CD8-positive, alpha-beta T cell (primary cell): ENCODE measurements at regions of chr1 and their contacts with region 1.

Region 1: DNA sequence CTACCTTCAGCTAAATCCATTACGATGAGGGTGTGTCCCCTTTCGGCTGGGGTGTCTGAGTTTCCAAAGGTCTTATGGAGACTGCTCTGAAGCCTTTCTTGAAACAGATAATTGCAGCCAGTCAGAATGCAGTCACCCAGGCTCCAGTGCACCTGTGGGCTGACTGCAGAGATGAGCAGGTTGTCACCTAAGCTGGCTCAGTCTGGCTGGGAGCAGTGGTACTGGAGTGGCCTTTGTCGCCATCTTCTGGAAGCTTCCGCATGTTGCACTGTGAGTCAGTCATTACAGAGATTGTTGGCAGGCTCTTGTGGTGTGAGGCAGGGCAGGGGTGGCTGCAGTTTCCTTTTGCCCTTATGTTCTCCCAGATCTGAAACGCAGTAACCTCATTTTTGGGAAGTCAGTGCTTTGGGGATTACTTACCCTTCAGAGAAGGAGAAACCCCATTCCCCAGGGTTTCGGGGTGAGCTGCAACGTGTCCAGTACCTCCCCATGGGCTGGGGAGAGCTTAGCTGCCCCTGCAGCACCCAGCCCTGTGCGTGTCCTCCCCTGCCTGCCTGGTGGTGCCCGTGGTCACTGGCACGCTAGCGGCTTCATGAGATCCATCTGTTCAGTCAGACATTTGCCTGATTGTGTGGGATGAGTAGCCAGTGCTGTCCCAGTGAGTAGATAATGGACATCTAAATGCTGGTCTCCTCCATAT is 48.0 kb downstream of the SMYD2 start:
- DNase-seq: peak; percentile 62 to 87 (median 75)
- ATAC-seq: peak; percentile 98
- H3K4me3 ChIP-seq: no peak overlapping the region
- H3K4me3 Mint-ChIP-seq: no peak overlapping the region
- H3K27ac ChIP-seq: no peak overlapping the region
- H3K27ac Mint-ChIP-seq: no peak overlapping the region
- H3K4me1 ChIP-seq: no peaks in the 10 kb centered on the region
- H3K4me1 Mint-ChIP-seq: no peaks in the 10 kb centered on the region
- H3K27me3 ChIP-seq: no peaks in the 10 kb centered on the region
- H3K27me3 Mint-ChIP-seq: no peaks in the 10 kb centered on the region
- CTCF ChIP-seq: peak; percentile 79

Region 2: DNA sequence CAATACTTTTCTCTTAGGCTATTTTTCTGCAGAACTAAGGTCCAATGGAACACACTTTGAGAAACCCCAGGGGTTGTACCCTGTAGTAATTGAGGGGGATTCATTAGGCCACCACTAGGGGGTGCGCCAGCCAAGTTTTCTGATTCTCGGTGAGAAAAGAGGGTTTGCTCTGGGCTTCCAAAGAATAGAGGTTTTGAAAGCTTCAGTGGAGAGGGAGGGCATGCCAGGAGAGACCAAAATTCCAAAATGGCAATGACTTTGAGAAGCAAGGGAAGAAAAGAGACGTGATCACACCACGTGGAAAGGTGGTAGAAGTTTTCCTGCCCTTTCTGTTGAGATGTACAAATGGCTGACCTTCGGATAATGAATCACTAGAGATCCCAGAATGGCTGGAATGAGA is 954.6 kb before region 1 on chr1:
- CTCF ChIA-PET with region 1: no interaction called
- POLR2A ChIA-PET with region 1: no interaction called
- intact Hi-C with region 1: loop called in 1 of 2 experiments (anchors 2 kb)
- DNase-seq: peak; percentile 13 to 53 (median 32)
- ATAC-seq: no peak
- H3K4me3 ChIP-seq: no peak overlapping the region
- H3K4me3 Mint-ChIP-seq: no peak overlapping the region
- H3K27ac ChIP-seq: no peak overlapping the region
- H3K27ac Mint-ChIP-seq: no peak overlapping the region
- H3K4me1 ChIP-seq: no peaks in the 10 kb centered on the region
- H3K4me1 Mint-ChIP-seq: no peaks in the 10 kb centered on the region
- H3K27me3 ChIP-seq: no peaks in the 10 kb centered on the region
- H3K27me3 Mint-ChIP-seq: no peaks in the 10 kb centered on the region
- CTCF ChIP-seq: peak; percentile 73

Region 3: DNA sequence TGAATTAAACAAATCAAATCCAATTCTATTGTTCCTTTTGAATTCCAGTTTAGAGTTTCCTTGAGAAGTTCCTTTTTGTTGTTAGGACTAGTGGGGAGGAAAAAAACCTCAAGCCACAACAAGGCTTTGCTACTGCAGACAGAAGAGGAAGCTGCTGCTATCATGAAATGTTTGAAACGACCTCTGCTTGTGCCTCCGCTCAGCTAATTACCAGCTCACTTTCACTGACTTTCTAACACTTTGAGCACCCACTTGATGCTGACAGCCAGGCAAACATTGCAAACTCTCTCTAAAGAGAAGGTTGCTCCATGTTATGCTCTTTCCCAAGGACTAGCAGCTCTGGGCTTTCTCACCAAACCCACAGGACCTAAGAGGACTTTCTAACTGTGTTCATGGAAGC is 545.0 kb before region 1 on chr1:
- CTCF ChIA-PET with region 1: no interaction called
- POLR2A ChIA-PET with region 1: no interaction called
- intact Hi-C with region 1: no loop called
- DNase-seq: peak in 2 of 9 experiments; percentile 2 to 31
- ATAC-seq: no peak
- H3K4me3 ChIP-seq: no peak overlapping the region
- H3K4me3 Mint-ChIP-seq: peak overlapping the region; percentile 20
- H3K27ac ChIP-seq: no peak overlapping the region
- H3K27ac Mint-ChIP-seq: no peak overlapping the region
- H3K4me1 ChIP-seq: peaks cover 9% of the 10 kb centered on the region
- H3K4me1 Mint-ChIP-seq: peaks cover 8% of the 10 kb centered on the region
- H3K27me3 ChIP-seq: peaks cover 0 to 4% of the 10 kb centered on the region in 2 experiments
- H3K27me3 Mint-ChIP-seq: peaks cover 10% of the 10 kb centered on the region
- CTCF ChIP-seq: no peak

Region 4: GRCh38 chr1:214135886-214136285 is 193.0 kb before region 1 on chr1:
- CTCF ChIA-PET with region 1: no interaction called
- POLR2A ChIA-PET with region 1: no interaction called
- intact Hi-C with region 1: no loop called
- DNase-seq: no peak
- ATAC-seq: no peak
- H3K4me3 ChIP-seq: no peak overlapping the region
- H3K4me3 Mint-ChIP-seq: no peak overlapping the region
- H3K27ac ChIP-seq: no peak overlapping the region
- H3K27ac Mint-ChIP-seq: no peak overlapping the region
- H3K4me1 ChIP-seq: no peaks in the 10 kb centered on the region
- H3K4me1 Mint-ChIP-seq: no peaks in the 10 kb centered on the region
- H3K27me3 ChIP-seq: peaks cover 0 to 4% of the 10 kb centered on the region in 2 experiments
- H3K27me3 Mint-ChIP-seq: no peaks in the 10 kb centered on the region
- CTCF ChIP-seq: no peak

Region 5: GRCh38 chr1:214261206-214262123 is 67.5 kb before region 1 on chr1:
- CTCF ChIA-PET with region 1: interaction called, 681 read pairs
- POLR2A ChIA-PET with region 1: interaction called, 11 read pairs
- intact Hi-C with region 1: loop called (anchors 1 kb)
- DNase-seq: peak; percentile 61 to 89 (median 80)
- ATAC-seq: peak; percentile 96
- H3K4me3 ChIP-seq: no peak overlapping the region
- H3K4me3 Mint-ChIP-seq: no peak overlapping the region
- H3K27ac ChIP-seq: no peak overlapping the region
- H3K27ac Mint-ChIP-seq: no peak overlapping the region
- H3K4me1 ChIP-seq: peaks cover 3% of the 10 kb centered on the region
- H3K4me1 Mint-ChIP-seq: peaks cover 2% of the 10 kb centered on the region
- H3K27me3 ChIP-seq: peaks cover 0 to 2% of the 10 kb centered on the region in 2 experiments
- H3K27me3 Mint-ChIP-seq: peaks cover 63% of the 10 kb centered on the region
- CTCF ChIP-seq: peak; percentile 94

Region 6: GRCh38 chr1:214303141-214303930 is 25.6 kb before region 1 on chr1:
- CTCF ChIA-PET with region 1: interaction called, 16 read pairs
- POLR2A ChIA-PET with region 1: no interaction called
- intact Hi-C with region 1: no loop called
- DNase-seq: no peak
- ATAC-seq: no peak
- H3K4me3 ChIP-seq: no peak overlapping the region
- H3K4me3 Mint-ChIP-seq: no peak overlapping the region
- H3K27ac ChIP-seq: no peak overlapping the region
- H3K27ac Mint-ChIP-seq: peak overlapping the region; percentile 66
- H3K4me1 ChIP-seq: peaks cover 9% of the 10 kb centered on the region
- H3K4me1 Mint-ChIP-seq: peaks cover 38% of the 10 kb centered on the region
- H3K27me3 ChIP-seq: no peaks in the 10 kb centered on the region
- H3K27me3 Mint-ChIP-seq: no peaks in the 10 kb centered on the region
- CTCF ChIP-seq: no peak

Region 7: DNA sequence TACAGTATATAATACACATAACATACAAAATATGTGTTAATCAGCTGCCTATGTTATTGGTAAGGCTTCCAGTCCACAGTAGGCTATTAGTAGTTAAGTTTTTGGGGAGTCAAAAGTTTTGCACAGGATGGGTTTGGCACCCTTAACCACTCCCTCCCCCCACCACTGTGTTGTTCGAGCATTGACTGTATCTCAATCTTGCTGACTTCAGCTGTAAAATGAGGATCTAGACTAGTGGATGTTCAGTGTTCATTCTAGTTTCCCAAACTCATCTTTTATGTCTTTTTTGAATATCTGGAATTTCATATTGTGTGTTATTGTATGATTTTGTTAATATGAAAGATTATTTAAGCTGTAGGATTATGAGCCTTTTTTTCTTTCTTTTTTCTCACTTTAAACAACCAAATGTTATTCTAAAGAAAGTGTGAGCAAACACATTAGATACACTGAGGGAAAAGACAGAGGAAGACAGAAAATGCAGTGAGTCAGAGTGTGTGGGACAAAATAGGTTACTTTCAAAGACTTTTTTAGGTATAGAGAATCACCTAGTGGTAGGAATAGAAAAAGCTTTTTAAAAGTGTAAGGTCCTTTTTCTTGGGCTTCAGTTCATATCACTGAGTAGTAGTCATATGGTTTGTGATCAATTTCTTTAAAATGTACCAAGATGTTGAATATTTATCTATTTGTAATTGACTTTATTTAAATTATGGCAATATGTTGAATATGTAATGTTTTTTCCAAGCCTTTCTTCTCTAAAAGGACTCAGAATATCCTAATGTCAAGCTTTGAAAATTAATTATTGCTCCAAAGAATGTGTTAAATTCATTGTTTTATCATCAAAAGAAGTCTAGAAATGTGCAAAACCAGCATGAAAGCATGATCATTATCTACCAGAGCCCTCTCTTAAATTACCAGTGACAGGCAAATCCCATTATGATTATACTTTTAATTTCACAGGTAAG is 256.2 kb after region 1 on chr1:
- CTCF ChIA-PET with region 1: interaction called, 14 read pairs
- POLR2A ChIA-PET with region 1: no interaction called
- intact Hi-C with region 1: loop called in 1 of 2 experiments (anchors 2 kb)
- DNase-seq: no peak
- ATAC-seq: no peak
- H3K4me3 ChIP-seq: no peak overlapping the region
- H3K4me3 Mint-ChIP-seq: no peak overlapping the region
- H3K27ac ChIP-seq: no peak overlapping the region
- H3K27ac Mint-ChIP-seq: no peak overlapping the region
- H3K4me1 ChIP-seq: no peaks in the 10 kb centered on the region
- H3K4me1 Mint-ChIP-seq: no peaks in the 10 kb centered on the region
- H3K27me3 ChIP-seq: peaks cover 0 to 3% of the 10 kb centered on the region in 2 experiments
- H3K27me3 Mint-ChIP-seq: peaks cover 10% of the 10 kb centered on the region
- CTCF ChIP-seq: peak; percentile 37

Region 8: DNA sequence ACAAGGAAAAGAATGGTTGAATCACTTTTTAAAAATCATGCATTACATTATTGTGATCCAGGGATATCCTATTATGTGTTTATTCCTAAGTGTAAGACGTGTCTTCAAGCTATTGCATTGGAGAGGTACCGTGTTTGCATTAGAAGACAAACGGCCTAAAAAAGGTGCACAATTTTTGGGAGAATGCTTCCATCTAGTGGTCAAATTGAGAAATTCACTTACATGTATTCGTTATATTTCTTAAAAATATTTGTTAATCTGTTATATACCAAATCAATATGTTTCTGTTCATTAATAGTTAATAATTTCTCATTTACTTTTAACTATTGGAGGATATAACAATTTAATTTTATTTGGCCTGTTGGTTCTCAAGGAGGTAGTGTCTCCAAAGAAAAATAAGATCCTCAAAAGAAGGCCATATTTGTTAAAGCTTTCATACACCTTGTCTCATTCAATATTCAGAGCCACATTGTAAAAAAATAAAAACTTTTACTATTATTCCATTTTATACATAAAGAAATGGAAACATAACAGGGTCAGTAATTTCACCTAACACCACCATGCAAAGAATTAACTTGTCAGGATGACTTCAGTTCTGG is 1197.7 kb after region 1 on chr1:
- CTCF ChIA-PET with region 1: interaction called, 11 read pairs
- POLR2A ChIA-PET with region 1: no interaction called
- intact Hi-C with region 1: loop called (anchors 1 to 2 kb)
- DNase-seq: peak in 2 of 9 experiments; percentile 37 to 55
- ATAC-seq: no peak
- H3K4me3 ChIP-seq: no peak overlapping the region
- H3K4me3 Mint-ChIP-seq: no peak overlapping the region
- H3K27ac ChIP-seq: no peak overlapping the region
- H3K27ac Mint-ChIP-seq: no peak overlapping the region
- H3K4me1 ChIP-seq: no peaks in the 10 kb centered on the region
- H3K4me1 Mint-ChIP-seq: no peaks in the 10 kb centered on the region
- H3K27me3 ChIP-seq: no peaks in the 10 kb centered on the region
- H3K27me3 Mint-ChIP-seq: peaks cover 9% of the 10 kb centered on the region
- CTCF ChIP-seq: peak; percentile 87